CD4-positive, alpha-beta memory T cell (primary cell): ENCODE measurements at regions of chr11 and their contacts with region 1.

Region 1: GRCh38 chr11:3939211-3939610 is 83.7 kb downstream of the STIM1 start:
- DNase-seq: no peak
- H3K4me3 ChIP-seq: no peak overlapping the region
- H3K4me3 Mint-ChIP-seq: no peak overlapping the region
- H3K27ac ChIP-seq: no peak overlapping the region
- H3K27ac Mint-ChIP-seq: peak overlapping the region; percentile 9 to 82 (median 77)
- H3K4me1 ChIP-seq: peaks cover 70% of the 10 kb centered on the region
- H3K4me1 Mint-ChIP-seq: peaks cover 63 to 85% (median 75%) of the 10 kb centered on the region in 4 donors
- H3K27me3 ChIP-seq: no peaks in the 10 kb centered on the region
- H3K27me3 Mint-ChIP-seq: no peaks in the 10 kb centered on the region

Region 2: GRCh38 chr11:3920148-3920852 is 18.9 kb before region 1 on chr11:
- CTCF ChIA-PET with region 1: interaction called, 14 read pairs
- POLR2A ChIA-PET with region 1: interaction called, 4 read pairs
- intact Hi-C with region 1: loop called (anchors 2 kb)
- DNase-seq: peak; percentile 36 to 80 (median 46)
- H3K4me3 ChIP-seq: no peak overlapping the region
- H3K4me3 Mint-ChIP-seq: peak overlapping the region in 7 of 8 donors; percentile 1 to 67 (median 48)
- H3K27ac ChIP-seq: no peak overlapping the region
- H3K27ac Mint-ChIP-seq: peak overlapping the region; percentile 8 to 83 (median 48)
- H3K4me1 ChIP-seq: peaks cover 50% of the 10 kb centered on the region
- H3K4me1 Mint-ChIP-seq: peaks cover 37 to 60% (median 49%) of the 10 kb centered on the region in 4 donors
- H3K27me3 ChIP-seq: no peaks in the 10 kb centered on the region
- H3K27me3 Mint-ChIP-seq: no peaks in the 10 kb centered on the region

Region 3: DNA sequence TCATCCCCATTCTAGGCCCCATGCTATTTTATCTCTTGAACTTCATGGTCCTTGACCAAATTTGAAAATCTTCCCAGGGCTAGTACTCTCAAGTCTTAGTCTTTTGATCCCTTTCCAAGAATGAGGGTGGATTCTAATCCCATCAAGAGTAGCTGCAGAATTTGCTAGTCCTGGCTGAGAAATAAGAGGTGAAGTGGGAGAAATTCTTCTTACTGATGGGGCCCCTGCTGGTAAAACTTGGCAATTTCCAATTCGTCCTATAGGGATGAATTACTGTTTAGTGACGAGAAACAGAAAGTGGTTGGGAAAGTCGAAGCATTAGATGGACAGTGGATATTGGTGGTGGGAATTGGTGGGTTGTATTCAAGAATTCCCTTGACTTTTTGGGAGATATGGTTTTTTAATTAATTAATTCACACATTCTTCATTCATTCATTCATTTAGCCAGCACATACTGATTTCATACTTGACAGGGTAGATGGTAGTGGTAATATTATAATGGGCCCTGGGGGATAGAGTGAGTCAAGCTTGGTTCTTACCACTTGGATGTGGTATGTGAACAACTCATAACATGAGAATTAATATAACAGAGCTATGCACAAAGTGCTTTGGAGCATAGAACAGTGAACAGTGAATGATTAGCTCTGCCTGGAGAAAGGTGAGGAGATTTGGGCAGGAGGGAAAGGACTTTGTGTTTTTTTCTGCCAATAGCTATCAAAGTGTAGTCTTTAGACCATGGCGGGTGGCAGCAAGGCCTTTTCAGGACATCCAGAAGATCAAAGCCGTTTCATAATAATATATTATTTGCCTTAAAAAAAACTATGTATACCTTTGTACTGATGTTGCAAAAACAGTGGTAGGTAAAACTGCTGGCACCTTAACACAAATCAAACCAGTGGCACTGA is 20.1 kb after region 1 on chr11:
- CTCF ChIA-PET with region 1: interaction called, 26 read pairs
- POLR2A ChIA-PET with region 1: interaction called, 4 read pairs
- intact Hi-C with region 1: loop called (anchors 2 kb)
- DNase-seq: no peak
- H3K4me3 ChIP-seq: no peak overlapping the region
- H3K4me3 Mint-ChIP-seq: peak overlapping the region in 3 of 8 donors; percentile 1 to 6 (median 4)
- H3K27ac ChIP-seq: no peak overlapping the region
- H3K27ac Mint-ChIP-seq: peak overlapping the region in 3 of 7 donors; percentile 11 to 68 (median 37)
- H3K4me1 ChIP-seq: peaks cover 60% of the 10 kb centered on the region
- H3K4me1 Mint-ChIP-seq: peaks cover 50 to 90% (median 71%) of the 10 kb centered on the region in 4 donors
- H3K27me3 ChIP-seq: no peaks in the 10 kb centered on the region
- H3K27me3 Mint-ChIP-seq: no peaks in the 10 kb centered on the region

Region 4: DNA sequence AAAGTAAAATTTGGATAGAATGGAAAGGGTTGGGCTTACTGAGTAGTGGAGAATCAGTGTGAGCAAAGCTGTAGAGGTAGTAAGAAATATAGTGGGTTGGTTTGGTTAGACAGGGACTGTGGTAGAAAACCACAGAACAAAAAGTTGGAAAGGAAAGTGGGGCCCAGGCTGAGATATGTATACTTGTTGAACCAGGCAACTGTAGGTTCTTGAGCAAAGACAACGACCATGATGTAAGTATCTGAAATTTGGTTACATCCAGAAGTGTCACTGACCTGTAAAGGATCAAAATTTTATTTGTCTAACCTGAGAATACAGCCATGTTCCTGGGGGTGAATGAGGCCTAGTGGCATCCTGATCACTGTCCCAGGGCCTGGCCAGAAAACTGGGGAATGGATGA is 30.4 kb after region 1 on chr11:
- CTCF ChIA-PET with region 1: interaction called, 3 read pairs
- POLR2A ChIA-PET with region 1: interaction called, 12 read pairs
- intact Hi-C with region 1: no loop called
- DNase-seq: peak in 2 of 5 donors; percentile 13 to 22
- H3K4me3 ChIP-seq: no peak overlapping the region
- H3K4me3 Mint-ChIP-seq: peak overlapping the region; percentile 1 to 80 (median 36)
- H3K27ac ChIP-seq: no peak overlapping the region
- H3K27ac Mint-ChIP-seq: peak overlapping the region; percentile 0 to 90 (median 57)
- H3K4me1 ChIP-seq: peaks cover 47% of the 10 kb centered on the region
- H3K4me1 Mint-ChIP-seq: peaks cover 54 to 82% (median 69%) of the 10 kb centered on the region in 4 donors
- H3K27me3 ChIP-seq: no peaks in the 10 kb centered on the region
- H3K27me3 Mint-ChIP-seq: no peaks in the 10 kb centered on the region

Region 5: DNA sequence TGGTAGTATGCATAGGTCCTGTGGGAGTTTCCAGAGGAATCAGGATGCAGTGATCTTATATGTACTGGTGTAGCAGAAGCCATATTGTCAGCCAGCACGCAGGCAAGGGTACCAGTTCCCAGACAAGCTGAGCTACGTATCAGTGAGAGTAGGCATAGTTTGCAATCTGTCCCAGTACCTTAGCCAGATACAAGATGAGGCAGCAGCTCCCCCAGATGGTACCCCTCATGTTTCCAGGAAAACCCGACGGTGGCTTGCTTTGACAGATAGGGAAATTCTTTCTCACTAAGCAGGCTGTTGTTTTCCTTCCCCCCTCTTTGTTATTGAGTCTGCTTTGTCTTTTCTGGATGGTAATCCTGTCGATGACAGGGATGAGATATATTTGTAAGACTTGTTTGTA is 45.7 kb after region 1 on chr11:
- CTCF ChIA-PET with region 1: interaction called, 13 read pairs
- POLR2A ChIA-PET with region 1: interaction called, 3 read pairs
- intact Hi-C with region 1: loop called (anchors 10 kb)
- DNase-seq: peak in 2 of 5 donors; percentile 9 to 17
- H3K4me3 ChIP-seq: no peak overlapping the region
- H3K4me3 Mint-ChIP-seq: peak overlapping the region in 1 of 8 donors; percentile 66
- H3K27ac ChIP-seq: no peak overlapping the region
- H3K27ac Mint-ChIP-seq: peak overlapping the region in 5 of 7 donors; percentile 1 to 95 (median 83)
- H3K4me1 ChIP-seq: peaks cover 68% of the 10 kb centered on the region
- H3K4me1 Mint-ChIP-seq: peaks cover 61 to 91% (median 78%) of the 10 kb centered on the region in 4 donors
- H3K27me3 ChIP-seq: no peaks in the 10 kb centered on the region
- H3K27me3 Mint-ChIP-seq: no peaks in the 10 kb centered on the region

Region 6: DNA sequence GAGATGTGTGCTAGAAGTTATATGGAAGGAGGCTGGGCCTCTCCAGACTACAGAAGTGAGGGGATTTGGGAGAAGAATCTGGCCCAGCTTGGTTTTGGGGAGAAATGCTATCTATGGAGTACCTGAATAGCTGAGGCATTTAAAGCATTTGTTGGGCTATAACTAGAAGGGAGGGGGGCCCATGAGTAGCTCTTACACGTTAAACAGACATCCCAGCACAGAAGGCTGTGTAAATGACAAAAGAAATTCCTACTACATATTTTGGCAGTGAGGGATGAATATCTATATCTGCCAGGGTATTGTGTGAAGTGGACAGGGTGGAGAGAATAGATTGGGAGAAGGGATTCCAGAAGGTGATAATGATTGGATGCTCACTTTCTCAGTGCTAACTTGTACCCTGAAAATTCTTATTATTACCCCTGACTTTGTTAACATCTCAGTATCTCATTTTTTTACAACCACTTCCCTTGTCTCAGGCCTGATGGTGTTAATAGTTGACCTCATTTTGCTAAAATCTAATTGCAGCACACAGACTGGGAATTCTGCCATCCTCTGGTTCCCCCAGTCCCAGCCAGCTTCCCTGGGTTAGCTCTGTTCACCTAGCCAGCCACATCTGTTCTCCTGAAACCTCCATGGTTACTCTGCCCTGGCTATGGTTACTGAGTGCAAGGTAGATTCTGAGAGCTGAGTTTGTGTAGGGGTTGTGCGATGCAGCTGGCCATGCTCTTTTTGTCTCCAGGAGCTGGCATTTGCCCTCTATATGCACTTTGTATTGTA is 126.6 kb after region 1 on chr11:
- CTCF ChIA-PET with region 1: interaction called, 179 read pairs
- POLR2A ChIA-PET with region 1: interaction called, 4 read pairs
- intact Hi-C with region 1: loop called (anchors 2 kb)
- DNase-seq: no peak
- H3K4me3 ChIP-seq: no peak overlapping the region
- H3K4me3 Mint-ChIP-seq: peak overlapping the region in 3 of 8 donors; percentile 14 to 61 (median 48)
- H3K27ac ChIP-seq: no peak overlapping the region
- H3K27ac Mint-ChIP-seq: peak overlapping the region; percentile 60 to 93 (median 80)
- H3K4me1 ChIP-seq: peaks cover 65% of the 10 kb centered on the region
- H3K4me1 Mint-ChIP-seq: peaks cover 63 to 75% (median 67%) of the 10 kb centered on the region in 4 donors
- H3K27me3 ChIP-seq: no peaks in the 10 kb centered on the region
- H3K27me3 Mint-ChIP-seq: no peaks in the 10 kb centered on the region